Ovary (tissue), 10 donors: ENCODE measurements at regions of chr15 and their contacts with region 1.

Region 1: DNA sequence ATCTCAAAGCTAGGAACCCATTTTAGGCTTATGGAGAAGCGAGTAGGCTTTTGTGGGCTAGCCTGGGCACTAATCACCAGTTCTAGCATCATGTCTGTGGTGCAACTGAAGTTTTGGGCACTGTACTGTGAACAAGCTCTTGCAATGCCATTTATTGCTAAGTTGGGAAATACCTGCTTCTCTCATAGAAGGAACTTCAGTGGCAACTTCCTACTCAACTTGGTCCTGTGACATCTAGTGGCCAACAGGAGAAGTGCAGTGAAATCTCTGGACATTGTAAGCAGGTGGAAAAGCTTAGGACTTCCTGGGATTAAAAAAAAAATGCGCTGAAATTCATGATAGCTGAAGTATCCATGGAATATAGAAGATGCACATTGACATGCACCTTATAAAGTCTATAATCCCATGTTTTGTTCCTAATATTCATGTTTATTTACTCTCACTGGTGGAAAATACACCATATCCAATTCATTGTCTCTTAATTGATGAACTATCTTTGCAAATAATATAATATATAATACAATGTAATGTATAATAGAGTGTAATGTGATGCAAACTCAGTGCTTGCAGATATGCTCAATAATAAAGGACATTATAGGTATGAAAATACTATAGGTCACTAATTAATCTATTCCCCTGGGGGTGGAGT is 6.5 kb upstream of the ALDH1A3 start:
- DNase-seq: peak in 3 of 5 donors; percentile 46 to 80 (median 60)
- H3K4me3 ChIP-seq: no peak overlapping the region
- H3K27ac ChIP-seq: no peak overlapping the region
- H3K4me1 ChIP-seq: no peaks in the 10 kb centered on the region
- H3K27me3 ChIP-seq: no peaks in the 10 kb centered on the region
- CTCF ChIP-seq: peak; percentile 65 to 88 (median 86)
- EP300 ChIP-seq: no peak
- POLR2A ChIP-seq: no peak

Region 2: GRCh38 chr15:99125061-99125891 is 1747.9 kb before region 1 on chr15:
- intact Hi-C with region 1: loop called in 1 of 4 experiments (anchors 5 kb)
- DNase-seq: peak in 1 of 5 donors; percentile 31
- H3K4me3 ChIP-seq: no peak overlapping the region
- H3K27ac ChIP-seq: no peak overlapping the region
- H3K4me1 ChIP-seq: peaks cover 12% of the 10 kb centered on the region
- H3K27me3 ChIP-seq: no peaks in the 10 kb centered on the region
- CTCF ChIP-seq: no peak
- EP300 ChIP-seq: no peak
- POLR2A ChIP-seq: no peak

Region 3: GRCh38 chr15:100633763-100634075 is 239.4 kb before region 1 on chr15:
- intact Hi-C with region 1: loop called (anchors 5 kb)
- DNase-seq: no peak
- H3K4me3 ChIP-seq: no peak overlapping the region
- H3K27ac ChIP-seq: no peak overlapping the region
- H3K4me1 ChIP-seq: no peaks in the 10 kb centered on the region
- H3K27me3 ChIP-seq: no peaks in the 10 kb centered on the region
- CTCF ChIP-seq: no peak
- EP300 ChIP-seq: no peak
- POLR2A ChIP-seq: no peak

Region 4: DNA sequence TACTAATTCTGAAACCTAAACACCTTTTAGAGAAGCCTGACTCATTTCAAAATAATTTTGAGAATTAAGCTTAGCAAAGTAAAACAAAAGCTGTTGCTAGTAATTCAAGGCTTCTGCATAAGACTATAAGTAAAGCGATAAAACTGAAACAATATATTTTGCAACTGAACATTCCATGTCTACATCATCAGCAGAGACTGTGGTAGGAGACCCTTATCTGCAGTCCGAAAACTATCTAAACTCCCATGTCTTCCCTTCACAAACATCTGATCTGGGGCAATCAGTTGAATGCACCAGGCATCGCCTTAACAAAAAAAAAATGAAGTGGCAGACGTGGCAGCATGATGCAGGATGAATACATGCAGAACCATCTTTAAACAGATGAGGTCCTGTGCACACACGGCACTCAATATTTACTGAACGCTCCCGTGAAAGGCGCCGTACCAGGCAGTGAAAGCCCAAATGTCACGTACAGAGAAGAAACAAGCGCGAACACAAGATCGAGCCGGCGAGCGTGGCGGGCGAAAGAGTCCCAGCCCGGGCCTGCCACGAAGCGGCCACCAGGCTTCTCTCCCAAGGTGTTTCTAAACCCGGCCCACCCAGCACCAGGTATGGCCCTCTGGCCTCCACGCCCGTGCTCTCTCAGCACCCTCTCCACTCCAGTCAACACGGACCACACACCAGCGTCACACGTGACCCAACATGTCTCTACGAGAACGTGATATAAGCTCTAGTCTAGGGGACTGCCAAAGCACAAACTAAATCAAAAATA is 315.7 kb after region 1 on chr15:
- intact Hi-C with region 1: no loop called
- DNase-seq: peak; percentile 61 to 69 (median 65)
- H3K4me3 ChIP-seq: peak overlapping the region; percentile 13
- H3K27ac ChIP-seq: peak overlapping the region; percentile 79
- H3K4me1 ChIP-seq: peaks cover 34% of the 10 kb centered on the region
- H3K27me3 ChIP-seq: no peaks in the 10 kb centered on the region
- CTCF ChIP-seq: no peak
- EP300 ChIP-seq: no peak
- POLR2A ChIP-seq: no peak